ENCODE measurements at regions of chr3 and their contacts with region 1.

Region 1: DNA sequence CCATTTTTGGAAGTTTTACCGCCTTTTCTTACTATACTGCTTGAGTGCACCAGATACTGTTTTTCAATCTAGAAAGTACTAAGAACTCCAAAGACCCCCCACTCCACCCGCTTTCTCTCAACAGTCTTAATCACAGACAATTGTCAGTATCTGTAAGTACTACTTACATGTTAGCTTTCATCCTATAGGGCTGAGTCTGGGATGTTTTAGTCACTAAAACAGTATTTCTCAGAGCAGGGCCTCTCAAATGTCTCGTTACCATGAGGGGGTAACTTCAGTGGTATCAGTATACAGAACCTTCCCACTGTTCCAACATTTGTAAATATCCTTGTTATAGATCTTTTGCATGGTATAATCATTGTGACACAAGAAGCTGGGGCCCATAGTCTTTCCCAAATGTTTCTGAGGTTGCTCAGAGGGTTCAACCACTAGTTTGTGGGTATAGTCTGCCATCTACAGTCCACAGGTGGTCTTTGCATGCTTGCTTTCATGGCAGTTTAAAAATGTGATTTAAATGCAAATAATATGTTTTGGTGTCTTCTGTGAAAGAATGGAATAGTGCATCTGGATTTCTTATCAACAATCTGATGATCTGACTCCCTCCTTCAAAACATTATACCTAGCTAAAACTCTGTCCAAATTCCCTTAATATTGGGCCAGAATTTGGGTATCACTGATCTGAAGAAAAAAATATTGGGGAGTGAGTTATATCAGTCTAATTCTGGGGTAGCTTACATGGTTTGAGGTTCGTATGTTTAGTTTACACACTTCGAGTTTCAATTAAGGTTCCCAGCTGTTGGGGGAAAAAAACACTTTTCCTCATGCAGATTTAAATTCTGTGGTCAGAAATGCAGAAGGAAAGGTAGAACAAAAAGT is 18.0 kb upstream of the DNAJC13 start:
- DNase-seq: peak; percentile 7
- H3K4me3 ChIP-seq: no peak overlapping the region
- CTCF ChIP-seq: peak; percentile 63

Region 2: GRCh38 chr3:131995891-131996290 is 403.4 kb before region 1 on chr3:
- CTCF ChIA-PET with region 1: no interaction called
- POLR2A ChIA-PET with region 1: no interaction called
- DNase-seq: no peak
- H3K4me3 ChIP-seq: no peak overlapping the region
- CTCF ChIP-seq: no peak

Region 3: DNA sequence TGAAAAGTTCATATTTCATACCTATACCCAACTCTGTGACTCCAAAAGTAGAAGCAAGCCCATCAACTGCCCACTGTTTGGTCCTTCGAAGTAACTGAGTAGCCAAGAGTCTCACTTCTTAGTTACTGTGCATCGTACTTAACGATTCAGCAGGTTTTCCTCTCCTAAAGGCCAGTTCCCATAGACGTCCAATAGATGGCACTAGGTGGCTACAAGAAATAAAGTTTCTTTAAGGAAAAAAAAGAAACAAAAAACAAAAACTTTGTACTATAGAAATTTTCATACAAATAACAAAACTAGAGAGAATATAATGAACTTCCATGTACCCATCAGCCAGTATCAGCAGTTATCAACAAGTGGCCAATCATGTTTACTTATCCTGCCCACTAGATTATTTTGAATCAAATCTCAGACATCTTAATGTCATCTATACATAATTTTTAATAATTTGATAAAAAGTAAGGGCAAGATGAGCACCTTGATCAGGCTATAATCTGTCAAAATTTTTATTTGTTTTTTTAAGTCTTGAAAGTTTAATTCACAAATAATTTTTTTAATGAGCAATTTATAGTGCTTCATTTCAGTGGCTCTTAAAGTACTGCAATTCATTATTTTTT is 145.9 kb before region 1 on chr3:
- CTCF ChIA-PET with region 1: interaction called, 27 read pairs
- POLR2A ChIA-PET with region 1: no interaction called
- DNase-seq: no peak
- H3K4me3 ChIP-seq: no peak overlapping the region
- CTCF ChIP-seq: peak; percentile 53

Region 4: GRCh38 chr3:132352541-132353143 is 46.6 kb before region 1 on chr3:
- CTCF ChIA-PET with region 1: interaction called, 171 read pairs
- POLR2A ChIA-PET with region 1: no interaction called
- DNase-seq: peak; percentile 12
- H3K4me3 ChIP-seq: no peak overlapping the region
- CTCF ChIP-seq: peak; percentile 75

Region 5: DNA sequence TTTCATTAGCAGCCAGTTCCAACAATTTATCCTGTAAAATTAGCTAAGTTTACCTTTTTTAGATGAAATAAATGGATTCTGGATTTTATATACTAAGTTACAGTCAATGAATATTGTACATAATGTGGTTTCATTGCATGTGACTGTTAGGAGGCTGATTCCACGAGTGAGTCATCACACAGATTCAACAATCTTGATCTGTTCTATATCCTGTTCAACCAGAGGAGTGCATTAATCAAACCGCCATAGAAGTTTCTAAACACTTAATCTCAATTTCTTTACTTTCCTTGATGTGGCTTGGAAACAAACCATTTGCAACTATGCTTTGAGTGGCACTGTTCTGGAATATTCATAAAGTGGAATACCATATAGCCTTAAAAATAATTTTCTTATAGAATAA is 33.3 kb after region 1 on chr3:
- CTCF ChIA-PET with region 1: no interaction called
- POLR2A ChIA-PET with region 1: no interaction called
- DNase-seq: no peak
- H3K4me3 ChIP-seq: no peak overlapping the region
- CTCF ChIP-seq: no peak

Region 6: DNA sequence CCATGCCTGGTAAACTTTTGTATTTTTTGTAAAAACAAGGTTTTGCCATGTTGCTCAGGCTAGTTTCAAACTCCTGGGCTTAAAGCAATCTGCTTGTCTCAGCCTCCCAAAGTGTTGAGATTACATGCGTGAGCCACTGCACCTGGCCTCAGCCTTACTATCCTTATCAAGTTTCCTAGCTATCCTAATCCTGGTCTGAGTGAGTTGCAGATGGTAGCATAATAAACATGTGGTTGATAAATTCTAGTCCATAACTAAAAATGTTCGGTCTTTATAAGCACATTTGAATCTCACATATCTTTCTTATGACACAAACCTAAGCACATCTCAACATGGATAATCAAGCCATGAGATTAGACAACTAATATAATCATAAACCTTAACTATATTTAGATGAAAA is 304.4 kb after region 1 on chr3:
- CTCF ChIA-PET with region 1: no interaction called
- POLR2A ChIA-PET with region 1: no interaction called
- DNase-seq: no peak
- H3K4me3 ChIP-seq: no peak overlapping the region
- CTCF ChIP-seq: no peak